Activated naive CD4-positive, alpha-beta T cell treated with anti-CD3 and anti-CD28 coated beads for 36 hours (primary cell): ENCODE measurements at regions of chr1 and their contacts with region 1.

Region 1: GRCh38 chr1:207797229-207797961 is 45.5 kb downstream of the CD46 start:
- DNase-seq: peak; percentile 94
- H3K4me3 Mint-ChIP-seq: no peak overlapping the region
- H3K27ac Mint-ChIP-seq: no peak overlapping the region
- H3K4me1 Mint-ChIP-seq: peaks cover 29% of the 10 kb centered on the region
- H3K27me3 Mint-ChIP-seq: no peaks in the 10 kb centered on the region

Region 2: DNA sequence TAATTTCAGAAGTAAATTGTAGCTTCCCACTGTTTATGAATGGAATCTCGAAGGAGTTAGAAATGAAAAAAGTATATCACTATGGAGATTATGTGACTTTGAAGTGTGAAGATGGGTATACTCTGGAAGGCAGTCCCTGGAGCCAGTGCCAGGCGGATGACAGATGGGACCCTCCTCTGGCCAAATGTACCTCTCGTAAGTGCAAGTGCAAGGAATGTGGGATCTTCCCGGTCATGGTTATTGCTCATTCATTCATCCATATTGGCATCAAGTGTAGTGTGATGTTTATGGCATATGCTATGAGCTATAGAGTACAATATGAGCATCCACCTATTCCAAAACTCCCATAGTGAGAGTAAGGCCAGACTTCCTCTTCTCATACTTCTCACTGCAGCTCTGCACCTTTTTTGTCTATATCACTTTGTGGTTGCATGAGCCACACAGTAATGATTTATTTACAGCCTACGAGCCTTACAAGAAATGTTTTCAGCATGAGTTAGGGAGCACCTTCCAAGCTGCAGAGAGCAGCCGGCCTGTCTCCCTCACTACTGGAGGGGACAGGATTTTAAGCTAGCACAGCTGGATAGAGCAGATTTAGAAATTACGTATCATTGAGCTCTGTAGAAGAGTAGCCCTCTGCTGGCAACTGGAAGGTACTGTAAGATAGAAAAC is 177.4 kb before region 1 on chr1:
- CTCF ChIA-PET with region 1: interaction called, 4 read pairs
- intact Hi-C with region 1: loop called (anchors 2 kb)
- DNase-seq: peak; percentile 6
- H3K4me3 Mint-ChIP-seq: no peak overlapping the region
- H3K27ac Mint-ChIP-seq: no peak overlapping the region
- H3K4me1 Mint-ChIP-seq: peaks cover 4% of the 10 kb centered on the region
- H3K27me3 Mint-ChIP-seq: no peaks in the 10 kb centered on the region

Region 3: GRCh38 chr1:207698822-207699483 is 98.4 kb before region 1 on chr1:
- CTCF ChIA-PET with region 1: interaction called, 5 read pairs
- intact Hi-C with region 1: loop called (anchors 2 kb)
- DNase-seq: peak; percentile 73
- H3K4me3 Mint-ChIP-seq: no peak overlapping the region
- H3K27ac Mint-ChIP-seq: no peak overlapping the region
- H3K4me1 Mint-ChIP-seq: no peaks in the 10 kb centered on the region
- H3K27me3 Mint-ChIP-seq: no peaks in the 10 kb centered on the region

Region 4: GRCh38 chr1:207711285-207711684 is 86.1 kb before region 1 on chr1:
- CTCF ChIA-PET with region 1: interaction called, 11 read pairs
- intact Hi-C with region 1: loop called (anchors 1 kb)
- DNase-seq: peak; percentile 18
- H3K4me3 Mint-ChIP-seq: no peak overlapping the region
- H3K27ac Mint-ChIP-seq: no peak overlapping the region
- H3K4me1 Mint-ChIP-seq: no peaks in the 10 kb centered on the region
- H3K27me3 Mint-ChIP-seq: no peaks in the 10 kb centered on the region

Region 5: DNA sequence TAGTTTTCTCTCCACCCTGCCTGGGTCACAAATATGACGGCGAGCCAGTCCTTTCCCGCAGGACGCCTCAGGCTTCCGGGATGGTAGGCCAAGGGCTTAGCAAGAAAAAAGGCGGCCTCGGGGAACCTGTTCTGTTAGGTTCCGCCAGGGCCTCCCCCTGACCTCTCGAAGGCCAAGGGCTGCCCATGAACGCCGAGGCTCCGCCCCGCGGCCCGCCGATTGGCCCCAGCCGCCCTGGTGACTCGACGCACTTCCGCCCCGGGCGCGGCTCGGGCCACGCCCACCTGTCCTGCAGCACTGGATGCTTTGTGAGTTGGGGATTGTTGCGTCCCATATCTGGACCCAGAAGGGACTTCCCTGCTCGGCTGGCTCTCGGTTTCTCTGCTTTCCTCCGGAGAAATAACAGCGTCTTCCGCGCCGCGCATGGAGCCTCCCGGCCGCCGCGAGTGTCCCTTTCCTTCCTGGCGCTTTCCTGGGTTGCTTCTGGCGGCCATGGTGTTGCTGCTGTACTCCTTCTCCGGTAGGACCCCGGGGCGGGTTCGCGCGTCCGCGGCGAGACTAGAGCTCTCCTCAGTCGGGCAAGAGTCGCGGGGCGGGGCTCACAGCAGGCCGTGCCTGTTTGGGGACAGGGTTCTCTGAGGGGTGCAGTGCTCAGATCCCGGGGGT is 45.5 kb before region 1 on chr1 and contains the start of gene CD46:
- CTCF ChIA-PET with region 1: interaction called, 8 read pairs
- intact Hi-C with region 1: loop called (anchors 1 kb)
- DNase-seq: peak; percentile 97
- H3K4me3 Mint-ChIP-seq: peak within 1 kb of the TSS; percentile 92
- H3K27ac Mint-ChIP-seq: peak within 1 kb of the TSS; percentile 98
- H3K4me1 Mint-ChIP-seq: peaks cover 59% of the 10 kb centered on the region
- H3K27me3 Mint-ChIP-seq: no peaks in the 10 kb centered on the region
- total RNA-seq, gene CD46: 91.0 to 93.4 TPM

Region 6: DNA sequence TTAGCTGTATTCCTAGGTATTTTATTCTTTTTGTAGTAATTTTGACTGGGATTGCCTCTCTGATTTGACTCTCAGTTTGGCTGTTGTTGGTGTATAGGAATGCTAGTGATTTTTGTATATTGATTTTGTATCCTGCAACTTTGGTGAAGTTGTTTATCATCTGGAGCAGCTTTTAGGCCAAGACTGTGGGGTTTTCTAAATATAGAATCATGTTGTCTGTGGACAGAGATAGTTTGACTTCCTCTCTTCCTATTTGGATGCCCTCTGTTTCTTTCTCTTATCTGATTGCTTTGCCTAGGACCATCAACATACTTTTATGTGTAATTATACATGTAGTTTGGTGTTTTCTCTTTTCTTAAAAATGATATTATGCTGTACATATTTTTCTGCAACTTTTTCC is 18.4 kb before region 1 on chr1:
- CTCF ChIA-PET with region 1: interaction called, 10 read pairs
- intact Hi-C with region 1: no loop called
- DNase-seq: no peak
- H3K4me3 Mint-ChIP-seq: no peak overlapping the region
- H3K27ac Mint-ChIP-seq: no peak overlapping the region
- H3K4me1 Mint-ChIP-seq: peaks cover 10% of the 10 kb centered on the region
- H3K27me3 Mint-ChIP-seq: no peaks in the 10 kb centered on the region

Region 7: DNA sequence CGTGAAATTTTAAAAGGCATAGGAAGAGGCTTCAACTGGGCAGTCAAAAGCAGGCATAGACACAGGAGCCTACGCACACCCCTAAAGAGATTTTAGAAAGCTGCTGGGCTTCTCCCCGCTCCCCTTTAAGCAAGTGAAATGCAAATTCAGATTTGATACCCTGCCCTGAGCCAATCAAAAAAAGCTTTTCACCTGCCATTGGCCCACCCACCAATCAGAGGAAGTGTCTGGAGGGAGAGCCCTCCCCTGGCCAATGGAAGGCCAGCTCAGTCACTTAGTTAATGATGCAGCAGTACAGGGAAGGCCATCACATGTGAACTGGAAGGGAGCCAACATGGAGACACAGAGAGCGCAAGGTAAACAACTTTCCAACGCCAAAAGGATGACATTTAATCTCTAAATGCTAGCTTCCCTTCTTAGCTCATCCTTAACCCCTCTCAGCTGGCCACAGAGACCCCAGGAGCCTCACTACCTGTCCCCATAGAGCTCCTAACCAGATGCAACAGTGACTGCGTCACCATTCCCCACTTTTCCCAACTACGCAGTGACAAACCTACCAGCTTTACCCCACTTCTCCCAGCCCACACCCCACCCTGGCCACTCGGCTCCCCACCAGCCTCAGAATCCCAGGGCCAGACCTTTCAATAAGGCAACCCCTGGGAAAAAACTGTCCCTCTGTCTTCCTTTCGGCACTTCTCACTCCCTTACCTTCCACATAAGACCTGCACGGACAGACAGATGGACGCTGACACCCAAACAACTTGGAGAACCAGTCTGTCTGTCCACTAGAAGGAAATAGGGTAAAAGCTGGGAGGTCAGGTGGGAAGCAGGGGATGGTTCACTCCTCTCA is 25.4 kb after region 1 on chr1:
- CTCF ChIA-PET with region 1: interaction called, 34 read pairs
- intact Hi-C with region 1: loop called (anchors 1 kb)
- DNase-seq: peak; percentile 87
- H3K4me3 Mint-ChIP-seq: peak overlapping the region; percentile 78
- H3K27ac Mint-ChIP-seq: peak overlapping the region; percentile 91
- H3K4me1 Mint-ChIP-seq: peaks cover 86% of the 10 kb centered on the region
- H3K27me3 Mint-ChIP-seq: no peaks in the 10 kb centered on the region